PC-9 (cell line): ENCODE measurements at regions of chr1 and their contacts with region 1.

Region 1: DNA sequence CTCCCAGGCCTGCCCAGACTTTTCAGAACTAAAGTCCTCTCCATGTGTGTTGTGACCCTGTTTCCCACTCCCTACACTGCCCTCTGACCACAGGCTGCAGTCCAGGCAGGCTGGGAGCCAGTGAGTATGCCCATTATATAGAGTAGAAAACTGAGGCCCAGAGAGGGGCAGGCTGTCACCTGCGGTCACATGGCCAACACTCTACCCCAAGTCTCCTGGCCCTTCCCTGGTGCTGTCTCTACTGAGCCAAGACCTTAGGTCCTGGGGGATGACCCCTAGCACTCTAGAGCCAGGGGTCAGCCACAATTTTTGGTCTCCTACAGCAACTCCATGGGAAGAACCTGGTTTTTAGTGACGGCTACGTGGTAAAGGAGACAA is 30.8 kb downstream of the RPS6KA1 start:
- DNase-seq: no peak
- H3K4me3 ChIP-seq: no peak overlapping the region
- H3K27ac ChIP-seq: no peak overlapping the region
- H3K4me1 ChIP-seq: no peaks in the 10 kb centered on the region
- H3K27me3 ChIP-seq: no peaks in the 10 kb centered on the region
- CTCF ChIP-seq: no peak

Region 2: GRCh38 chr1:26889551-26890466 is 329.4 kb after region 1 on chr1 and contains the start of gene GPN2:
- CTCF ChIA-PET with region 1: no interaction called
- POLR2A ChIA-PET with region 1: interaction called, 22 read pairs
- intact Hi-C with region 1: no loop called
- DNase-seq: peak; percentile 63 to 65
- H3K4me3 ChIP-seq: peak within 1 kb of the TSS; percentile 65
- H3K27ac ChIP-seq: peak within 1 kb of the TSS; percentile 62
- H3K4me1 ChIP-seq: 0 out of 2 replicates have a peak, but pooled peaks cover 10% of the 10 kb centered on the region
- H3K27me3 ChIP-seq: no peaks in the 10 kb centered on the region
- CTCF ChIP-seq: no peak
- total RNA-seq, gene GPN2: 23.8 and 30.6 TPM in 2 replicates